GM12878 (cell line): ENCODE measurements at regions of chr13 and their contacts with region 1.

Region 1: GRCh38 chr13:80374444-80374843 is 33.5 kb upstream of the SPRY2 start:
- DNase-seq: no peak
- ATAC-seq: no peak
- H3K4me3 ChIP-seq: no peak overlapping the region
- H3K27ac ChIP-seq: no peak overlapping the region
- H3K4me1 ChIP-seq: no peaks in the 10 kb centered on the region
- H3K27me3 ChIP-seq: no peaks in the 10 kb centered on the region
- CTCF ChIP-seq: no peak
- EP300 ChIP-seq: no peak
- POLR2A ChIP-seq: no peak
- RAD21 ChIP-seq: no peak

Region 2: GRCh38 chr13:80386002-80386401 is 11.6 kb after region 1 on chr13:
- CTCF ChIA-PET with region 1: interaction called, 22 read pairs
- POLR2A ChIA-PET with region 1: interaction called, 5 read pairs
- RAD21 ChIA-PET with region 1: interaction called, 13 read pairs
- SMC1A ChIA-PET with region 1: interaction called, 7 read pairs
- in situ Hi-C with region 1: no loop called
- intact Hi-C with region 1: no loop called
- DNase-seq: no peak
- ATAC-seq: peak; percentile 91
- H3K4me3 ChIP-seq: no peak overlapping the region
- H3K27ac ChIP-seq: no peak overlapping the region
- H3K4me1 ChIP-seq: no peaks in the 10 kb centered on the region
- H3K27me3 ChIP-seq: no peaks in the 10 kb centered on the region
- CTCF ChIP-seq: no peak
- EP300 ChIP-seq: no peak
- POLR2A ChIP-seq: no peak
- RAD21 ChIP-seq: 0 out of 2 replicates have a peak, but pooled peaks have one; percentile 14

Region 3: GRCh38 chr13:80633251-80633650 is 258.8 kb after region 1 on chr13:
- CTCF ChIA-PET with region 1: no interaction called
- POLR2A ChIA-PET with region 1: no interaction called
- RAD21 ChIA-PET with region 1: no interaction called
- SMC1A ChIA-PET with region 1: no interaction called
- in situ Hi-C with region 1: no loop called
- intact Hi-C with region 1: no loop called
- DNase-seq: no peak
- ATAC-seq: no peak
- H3K4me3 ChIP-seq: no peak overlapping the region
- H3K27ac ChIP-seq: no peak overlapping the region
- H3K4me1 ChIP-seq: no peaks in the 10 kb centered on the region
- H3K27me3 ChIP-seq: no peaks in the 10 kb centered on the region
- CTCF ChIP-seq: no peak
- EP300 ChIP-seq: no peak
- POLR2A ChIP-seq: no peak
- RAD21 ChIP-seq: no peak

Region 4: DNA sequence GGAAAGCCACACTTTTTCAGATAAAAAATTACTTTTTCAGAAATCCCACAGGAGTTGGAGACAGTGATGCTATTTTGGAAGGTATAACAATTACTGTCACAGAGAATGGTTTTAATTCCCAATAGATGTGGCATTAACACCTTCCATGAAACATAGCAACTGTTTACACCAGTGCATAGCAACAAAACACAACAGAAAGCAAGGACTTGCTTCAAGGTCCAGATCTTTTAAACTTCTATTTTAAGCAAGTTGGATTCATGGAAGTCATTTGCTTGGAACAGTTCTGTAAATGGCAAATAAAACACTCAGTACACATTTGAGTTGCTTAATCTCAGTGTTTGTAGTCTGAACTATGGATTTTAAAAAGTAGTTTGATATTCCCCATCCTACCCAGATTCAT is 352.4 kb after region 1 on chr13:
- CTCF ChIA-PET with region 1: no interaction called
- POLR2A ChIA-PET with region 1: interaction called, 10 read pairs
- RAD21 ChIA-PET with region 1: interaction called, 3 read pairs
- SMC1A ChIA-PET with region 1: no interaction called
- in situ Hi-C with region 1: no loop called
- intact Hi-C with region 1: no loop called
- DNase-seq: no peak
- ATAC-seq: no peak
- H3K4me3 ChIP-seq: no peak overlapping the region
- H3K27ac ChIP-seq: no peak overlapping the region
- H3K4me1 ChIP-seq: no peaks in the 10 kb centered on the region
- H3K27me3 ChIP-seq: no peaks in the 10 kb centered on the region
- CTCF ChIP-seq: no peak
- EP300 ChIP-seq: no peak
- POLR2A ChIP-seq: no peak
- RAD21 ChIP-seq: no peak